Mammary epithelial cell (primary cell): ENCODE measurements at regions of chr5 and their contacts with region 1.

Region 1: GRCh38 chr5:171342362-171343111 is 33.5 kb downstream of the TLX3 start:
- DNase-seq: peak; percentile 37
- H3K4me3 ChIP-seq: no peak overlapping the region
- H3K27ac ChIP-seq: no peak overlapping the region
- H3K4me1 ChIP-seq: no peaks in the 10 kb centered on the region
- H3K27me3 ChIP-seq: no peaks in the 10 kb centered on the region
- CTCF ChIP-seq: peak; percentile 68 to 74

Region 2: GRCh38 chr5:170638454-170639220 is 703.9 kb before region 1 on chr5:
- CTCF ChIA-PET with region 1: no interaction called
- dilution Hi-C with region 1: no loop called
- in situ Hi-C with region 1: loop called in 1 of 2 experiments (anchors 25 kb)
- intact Hi-C with region 1: loop called (anchors 5 kb)
- DNase-seq: peak; percentile 35
- H3K4me3 ChIP-seq: no peak overlapping the region
- H3K27ac ChIP-seq: no peak overlapping the region
- H3K4me1 ChIP-seq: peaks cover 7% of the 10 kb centered on the region
- H3K27me3 ChIP-seq: no peaks in the 10 kb centered on the region
- CTCF ChIP-seq: peak; percentile 70 to 92

Region 3: GRCh38 chr5:170747851-170748250 is 594.7 kb before region 1 on chr5:
- CTCF ChIA-PET with region 1: no interaction called
- dilution Hi-C with region 1: no loop called
- in situ Hi-C with region 1: loop called in 1 of 2 experiments (anchors 25 kb)
- intact Hi-C with region 1: loop called (anchors 2 kb)
- DNase-seq: no peak
- H3K4me3 ChIP-seq: no peak overlapping the region
- H3K27ac ChIP-seq: no peak overlapping the region
- H3K4me1 ChIP-seq: peaks cover 41% of the 10 kb centered on the region
- H3K27me3 ChIP-seq: peaks cover 1% of the 10 kb centered on the region
- CTCF ChIP-seq: peak; percentile 16 to 21

Region 4: GRCh38 chr5:170809551-170809950 is 533.0 kb before region 1 on chr5:
- CTCF ChIA-PET with region 1: no interaction called
- dilution Hi-C with region 1: no loop called
- in situ Hi-C with region 1: loop called (anchors 25 kb)
- intact Hi-C with region 1: loop called (anchors 1 kb)
- DNase-seq: peak; percentile 23
- H3K4me3 ChIP-seq: no peak overlapping the region
- H3K27ac ChIP-seq: no peak overlapping the region
- H3K4me1 ChIP-seq: no peaks in the 10 kb centered on the region
- H3K27me3 ChIP-seq: no peaks in the 10 kb centered on the region
- CTCF ChIP-seq: peak; percentile 3 to 54

Region 5: GRCh38 chr5:170986598-170986997 is 355.9 kb before region 1 on chr5:
- CTCF ChIA-PET with region 1: no interaction called
- dilution Hi-C with region 1: no loop called
- in situ Hi-C with region 1: loop called in 1 of 2 experiments (anchors 25 kb)
- intact Hi-C with region 1: loop called (anchors 2 kb)
- DNase-seq: peak; percentile 3
- H3K4me3 ChIP-seq: no peak overlapping the region
- H3K27ac ChIP-seq: no peak overlapping the region
- H3K4me1 ChIP-seq: no peaks in the 10 kb centered on the region
- H3K27me3 ChIP-seq: no peaks in the 10 kb centered on the region
- CTCF ChIP-seq: peak; percentile 16 to 37

Region 6: DNA sequence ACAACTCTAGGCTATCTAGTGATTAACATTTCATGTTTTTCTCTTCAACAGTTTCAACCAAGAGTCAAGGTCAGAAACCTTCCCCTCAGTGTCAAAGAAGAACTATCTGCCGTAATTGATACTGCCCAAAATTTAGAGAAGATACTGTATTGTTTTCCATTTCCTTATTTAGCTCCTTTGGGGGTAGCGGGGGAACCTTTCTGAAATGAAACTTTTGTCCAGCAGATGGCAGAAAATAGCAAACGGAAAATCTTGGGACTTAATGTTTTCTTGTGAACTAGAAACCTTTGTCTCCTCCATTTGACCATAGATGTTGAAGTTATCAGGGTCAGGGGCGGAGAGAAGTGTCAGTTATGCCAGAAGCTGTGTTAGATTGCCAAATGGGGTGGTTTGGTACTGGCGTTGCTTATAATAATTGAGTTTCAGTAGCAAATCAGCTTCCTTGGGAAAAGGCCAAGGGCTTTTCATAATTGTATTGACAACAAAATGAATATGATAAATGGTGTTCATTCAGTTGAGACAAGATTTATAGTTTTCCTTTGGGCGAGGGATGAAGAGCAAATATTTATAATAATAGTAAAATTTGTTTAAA is 135.2 kb before region 1 on chr5:
- CTCF ChIA-PET with region 1: interaction called, 4 read pairs
- dilution Hi-C with region 1: no loop called
- in situ Hi-C with region 1: loop called (anchors 5 to 10 kb)
- intact Hi-C with region 1: loop called (anchors 1 kb)
- DNase-seq: peak; percentile 16
- H3K4me3 ChIP-seq: no peak overlapping the region
- H3K27ac ChIP-seq: no peak overlapping the region
- H3K4me1 ChIP-seq: no peaks in the 10 kb centered on the region
- H3K27me3 ChIP-seq: no peaks in the 10 kb centered on the region
- CTCF ChIP-seq: peak; percentile 54 to 58

Region 7: DNA sequence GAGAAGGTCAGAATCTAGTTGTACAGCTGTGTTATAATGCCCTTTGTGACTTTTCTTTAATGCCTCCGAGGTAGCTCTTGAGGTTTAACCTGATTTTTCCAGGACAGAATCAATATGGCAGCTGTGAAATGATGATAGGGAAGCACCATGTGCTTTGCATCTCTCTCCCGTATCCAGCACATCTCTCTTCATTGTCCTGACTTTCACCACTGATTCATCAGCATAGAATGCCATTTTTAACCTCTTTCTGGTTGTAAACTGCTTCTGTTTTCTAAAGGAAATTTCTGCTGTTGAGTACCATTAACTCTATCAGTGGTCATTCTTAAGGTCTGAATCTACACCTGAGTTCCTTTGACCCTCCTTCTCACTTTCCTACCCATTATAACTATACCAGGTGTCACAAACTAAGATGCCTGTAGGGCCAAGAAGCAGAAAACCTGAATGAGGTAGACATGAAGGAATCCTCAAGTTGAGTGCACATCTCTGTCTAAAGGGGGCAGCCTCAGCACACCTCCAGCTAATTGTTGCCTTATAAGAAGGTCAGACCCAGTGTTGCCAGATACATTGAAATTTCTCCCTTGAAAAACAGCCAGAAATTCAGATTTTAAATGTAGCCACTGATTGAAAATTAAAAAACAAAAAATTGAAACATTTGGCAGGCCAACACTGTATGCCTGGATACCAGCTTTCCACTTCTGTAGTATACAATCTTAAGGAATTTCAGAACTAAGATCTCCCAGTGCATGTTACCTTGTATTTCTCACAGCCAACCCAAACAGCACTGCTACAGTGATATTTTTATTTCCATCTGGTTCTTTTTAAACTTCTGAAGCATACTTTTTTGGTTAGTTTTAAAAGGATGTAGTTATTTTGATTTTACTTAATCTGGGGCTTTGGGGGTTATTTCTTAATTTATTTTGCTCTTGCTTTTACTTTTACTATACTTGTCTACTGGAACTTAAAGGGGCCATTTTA is 69.3 kb before region 1 on chr5:
- CTCF ChIA-PET with region 1: no interaction called
- dilution Hi-C with region 1: loop called (anchors 5 kb)
- in situ Hi-C with region 1: no loop called
- intact Hi-C with region 1: loop called (anchors 1 kb)
- DNase-seq: peak; percentile 21
- H3K4me3 ChIP-seq: no peak overlapping the region
- H3K27ac ChIP-seq: no peak overlapping the region
- H3K4me1 ChIP-seq: no peaks in the 10 kb centered on the region
- H3K27me3 ChIP-seq: no peaks in the 10 kb centered on the region
- CTCF ChIP-seq: peak; percentile 40 to 47